Colonic mucosa (tissue), 4 donors: ENCODE measurements at regions of chr1 and their contacts with region 1.

Region 1: GRCh38 chr1:100265931-100266740 is at the start of gene RTCA:
- DNase-seq: peak; percentile 98
- H3K4me3 ChIP-seq: peak within 1 kb of the TSS; percentile 91
- H3K27ac ChIP-seq: peak within 1 kb of the TSS; percentile 89
- H3K4me1 ChIP-seq: peaks cover 10% of the 10 kb centered on the region
- H3K27me3 ChIP-seq: no peaks in the 10 kb centered on the region
- CTCF ChIP-seq: no peak
- total RNA-seq, gene RTCA: 39.4 to 41.4 TPM

Region 2: GRCh38 chr1:100132566-100133477 is 133.3 kb before region 1 on chr1 and contains the starts of genes SASS6 and TRMT13:
- intact Hi-C with region 1: loop called (anchors 10 kb)
- DNase-seq: peak; percentile 99
- H3K4me3 ChIP-seq: peak within 1 kb of the TSS; percentile 76
- H3K27ac ChIP-seq: peak within 1 kb of the TSS; percentile 59
- H3K4me1 ChIP-seq: peaks cover 11% of the 10 kb centered on the region
- H3K27me3 ChIP-seq: no peaks in the 10 kb centered on the region
- CTCF ChIP-seq: no peak
- total RNA-seq, gene SASS6: 3.3 to 8.0 TPM
- total RNA-seq, gene TRMT13: 8.6 to 11.5 TPM